ENCODE measurements at regions of chr3 and their contacts with region 1.

Region 1: DNA sequence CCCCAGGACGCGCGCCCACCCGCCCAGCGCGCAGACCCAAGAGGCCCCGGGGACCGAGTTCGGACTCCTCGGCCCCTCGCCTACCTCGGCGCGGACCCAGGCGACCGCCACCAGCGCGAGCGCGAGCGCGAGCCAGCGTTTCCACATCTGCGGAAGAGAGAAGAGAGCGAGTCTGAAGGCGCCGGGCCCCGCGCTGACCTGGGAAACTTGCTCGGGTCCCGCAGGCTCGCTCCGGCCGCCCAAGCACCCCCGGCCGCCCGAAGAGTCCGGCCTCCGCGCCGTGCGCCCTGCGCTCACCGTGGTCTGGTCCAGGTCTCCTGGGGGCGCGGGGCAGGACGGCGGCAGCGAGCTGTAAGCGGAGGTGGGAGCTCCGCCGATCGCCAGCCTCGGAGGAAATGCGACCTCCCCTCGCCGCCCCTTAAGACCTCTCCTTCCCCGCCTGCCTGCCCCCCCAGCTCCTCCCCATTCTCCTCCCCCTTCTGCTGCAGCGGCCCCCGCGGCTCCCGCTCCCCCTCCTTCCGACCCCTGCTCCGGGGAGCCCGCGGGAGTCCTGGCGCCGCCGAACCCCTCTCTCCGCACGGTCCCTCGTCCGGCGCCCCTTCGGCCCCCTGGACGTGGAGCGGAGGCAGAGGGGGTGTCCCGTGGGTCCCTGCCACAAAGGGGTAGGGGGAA is at the start of gene FSTL1:
- DNase-seq: peak in 1 of 2 experiments; percentile 82
- H3K4me3 ChIP-seq: peak within 1 kb of the TSS; percentile 74 to 97 (median 87)
- H3K27ac ChIP-seq: peak within 1 kb of the TSS; percentile 83; the same call in 1 of the 2 replicates
- H3K4me1 ChIP-seq: peaks cover 6 to 23% (median 19%) of the 10 kb centered on the region in 4 experiments; a peak in 5 of 7 replicates
- H3K27me3 ChIP-seq: no peaks in the 10 kb centered on the region
- CTCF ChIP-seq: no peak
- EP300 ChIP-seq: no peak
- POLR2A ChIP-seq: peak; percentile 71 to 93; a peak in 2 of 3 replicates
- RAD21 ChIP-seq: no peak
- total RNA-seq, gene FSTL1: 502 and 516 TPM in 2 replicates

Region 2: GRCh38 chr3:120460862-120461261 is 10.1 kb after region 1 on chr3:
- CTCF ChIA-PET with region 1: interaction called, 11 read pairs
- POLR2A ChIA-PET with region 1: interaction called, 10 read pairs
- DNase-seq: no peak
- H3K4me3 ChIP-seq: no peak overlapping the region
- H3K27ac ChIP-seq: no peak overlapping the region
- H3K4me1 ChIP-seq: peaks cover 0 to 11% (median 2%) of the 10 kb centered on the region in 4 experiments; a peak in 2 of 7 replicates
- H3K27me3 ChIP-seq: 0 out of 7 replicates have a peak, but pooled peaks cover 0 to 3% (median 0%) of the 10 kb centered on the region in 4 experiments
- CTCF ChIP-seq: no peak
- EP300 ChIP-seq: no peak
- POLR2A ChIP-seq: no peak
- RAD21 ChIP-seq: no peak

Region 3: DNA sequence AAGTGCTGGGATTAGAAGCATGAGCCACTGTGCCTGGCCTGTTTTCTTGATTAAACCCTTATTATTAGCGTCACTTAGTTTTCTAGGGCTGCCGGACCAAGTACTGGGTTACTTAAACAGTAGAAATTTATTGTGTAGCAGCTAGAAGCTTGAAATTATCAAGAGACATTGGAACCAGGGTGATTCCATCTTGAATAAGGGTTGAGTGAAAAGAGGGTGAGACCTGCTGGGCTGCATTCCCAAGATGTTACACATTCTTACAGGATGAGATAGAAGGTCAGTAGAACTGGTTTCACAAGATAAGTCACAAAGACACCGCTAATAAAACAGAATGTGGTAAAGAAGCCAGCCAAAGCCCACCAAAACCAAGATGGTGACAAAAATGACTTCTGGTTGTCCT is 18.7 kb after region 1 on chr3:
- CTCF ChIA-PET with region 1: interaction called, 10 read pairs
- POLR2A ChIA-PET with region 1: interaction called, 24 read pairs
- DNase-seq: no peak
- H3K4me3 ChIP-seq: peak overlapping the region in 2 of 4 experiments; percentile 7 to 10; a peak in 1 of 8 replicates
- H3K27ac ChIP-seq: peak overlapping the region; percentile 64
- H3K4me1 ChIP-seq: peaks cover 5 to 20% (median 10%) of the 10 kb centered on the region in 4 experiments; a peak in 5 of 7 replicates
- H3K27me3 ChIP-seq: no peaks in the 10 kb centered on the region
- CTCF ChIP-seq: no peak
- EP300 ChIP-seq: peak in 1 of 2 experiments; percentile 87; a peak in 1 of 3 replicates
- POLR2A ChIP-seq: no peak
- RAD21 ChIP-seq: no peak

Region 4: DNA sequence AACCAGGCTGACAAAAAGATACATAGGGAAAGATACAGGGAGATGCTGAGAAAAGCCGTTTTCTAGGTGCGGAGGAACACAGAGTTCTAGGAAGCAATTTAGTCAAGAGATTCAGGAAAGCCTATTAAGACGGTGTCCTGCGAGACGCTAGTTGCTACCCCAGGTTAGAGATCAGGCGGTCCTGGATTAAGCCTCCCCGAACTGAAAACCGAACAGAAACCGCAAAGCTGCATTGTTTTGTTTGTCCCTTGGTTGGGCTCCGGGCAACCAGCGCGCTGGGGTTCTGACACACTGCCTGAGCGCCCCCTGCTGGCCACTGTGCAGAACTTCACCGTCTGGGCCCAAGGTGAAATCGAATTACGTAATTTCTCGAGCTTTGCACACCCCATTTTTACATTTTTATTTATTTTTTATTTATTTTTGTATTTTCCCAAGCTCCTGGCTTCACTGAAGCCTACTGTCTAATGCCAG is 108.1 kb after region 1 on chr3:
- CTCF ChIA-PET with region 1: interaction called, 20 read pairs
- POLR2A ChIA-PET with region 1: interaction called, 11 read pairs
- DNase-seq: peak in 1 of 2 experiments; percentile 92
- H3K4me3 ChIP-seq: peak overlapping the region; percentile 73 to 81 (median 76); a peak in 7 of 8 replicates
- H3K27ac ChIP-seq: no peak overlapping the region
- H3K4me1 ChIP-seq: peaks cover 4 to 13% (median 6%) of the 10 kb centered on the region in 4 experiments; a peak in 6 of 7 replicates
- H3K27me3 ChIP-seq: peaks cover 0 to 3% (median 0%) of the 10 kb centered on the region in 4 experiments; a peak in 2 of 7 replicates
- CTCF ChIP-seq: peak; percentile 83 to 90 (median 86)
- EP300 ChIP-seq: peak in 1 of 2 experiments; percentile 76; a peak in 1 of 3 replicates
- POLR2A ChIP-seq: peak in 1 of 2 experiments; percentile 52; a peak in 2 of 3 replicates
- RAD21 ChIP-seq: peak; percentile 96 to 98